CD8-positive, alpha-beta T cell (primary cell): ENCODE measurements at regions of chr1 and their contacts with region 1.

Region 1: GRCh38 chr1:85259118-85259911 is at the start of gene C1orf52:
- DNase-seq: peak; percentile 86 to 99 (median 98)
- ATAC-seq: peak; percentile 96
- H3K4me3 ChIP-seq: peak within 1 kb of the TSS; percentile 65 to 93
- H3K4me3 Mint-ChIP-seq: peak within 1 kb of the TSS; percentile 97
- H3K27ac ChIP-seq: peak within 1 kb of the TSS; percentile 78 to 88
- H3K27ac Mint-ChIP-seq: peak within 1 kb of the TSS; percentile 95
- H3K4me1 ChIP-seq: peaks cover 24% of the 10 kb centered on the region
- H3K4me1 Mint-ChIP-seq: peaks cover 36% of the 10 kb centered on the region
- H3K27me3 ChIP-seq: no peaks in the 10 kb centered on the region
- H3K27me3 Mint-ChIP-seq: no peaks in the 10 kb centered on the region
- CTCF ChIP-seq: peak; percentile 99
- total RNA-seq, gene C1orf52: 70.7 to 74.4 TPM

Region 2: DNA sequence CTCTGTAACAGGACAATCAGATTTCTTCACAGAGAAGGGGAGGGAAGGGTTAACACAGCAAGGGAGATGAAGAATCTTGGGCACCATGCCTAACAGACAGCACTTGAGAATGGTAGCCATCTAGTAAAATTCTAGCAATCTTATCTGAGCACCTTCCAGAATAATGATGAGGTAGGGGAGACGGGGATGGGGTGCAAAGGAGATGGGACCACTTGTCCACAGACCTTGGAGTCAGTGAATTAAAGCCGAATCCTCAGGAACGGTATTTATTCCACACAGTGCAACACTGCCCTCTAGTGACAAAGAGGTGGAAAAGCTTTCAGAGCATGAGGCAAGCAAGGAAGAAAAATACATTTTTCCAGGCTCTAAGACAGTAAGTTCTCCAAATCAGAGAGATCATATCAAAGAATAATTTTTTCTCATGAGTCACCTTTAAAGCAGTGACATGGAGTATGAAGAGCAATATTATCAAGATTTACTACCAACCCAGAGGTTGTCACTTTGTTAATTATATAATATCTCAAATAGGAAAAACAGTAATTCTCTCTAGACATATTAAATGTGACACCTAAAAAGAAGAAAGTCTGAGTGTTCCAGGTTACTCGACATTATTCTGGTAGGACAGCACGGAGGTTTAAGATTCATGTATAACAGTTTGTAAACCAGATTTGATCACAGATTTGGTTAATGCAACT is 323.1 kb before region 1 on chr1:
- CTCF ChIA-PET with region 1: interaction called, 181 read pairs
- POLR2A ChIA-PET with region 1: no interaction called
- intact Hi-C with region 1: no loop called
- DNase-seq: peak in 7 of 9 experiments; percentile 10 to 79 (median 35)
- ATAC-seq: peak; percentile 73
- H3K4me3 ChIP-seq: no peak overlapping the region
- H3K4me3 Mint-ChIP-seq: no peak overlapping the region
- H3K27ac ChIP-seq: no peak overlapping the region
- H3K27ac Mint-ChIP-seq: no peak overlapping the region
- H3K4me1 ChIP-seq: peaks cover 5% of the 10 kb centered on the region
- H3K4me1 Mint-ChIP-seq: peaks cover 4% of the 10 kb centered on the region
- H3K27me3 ChIP-seq: no peaks in the 10 kb centered on the region
- H3K27me3 Mint-ChIP-seq: no peaks in the 10 kb centered on the region
- CTCF ChIP-seq: peak; percentile 98

Region 3: DNA sequence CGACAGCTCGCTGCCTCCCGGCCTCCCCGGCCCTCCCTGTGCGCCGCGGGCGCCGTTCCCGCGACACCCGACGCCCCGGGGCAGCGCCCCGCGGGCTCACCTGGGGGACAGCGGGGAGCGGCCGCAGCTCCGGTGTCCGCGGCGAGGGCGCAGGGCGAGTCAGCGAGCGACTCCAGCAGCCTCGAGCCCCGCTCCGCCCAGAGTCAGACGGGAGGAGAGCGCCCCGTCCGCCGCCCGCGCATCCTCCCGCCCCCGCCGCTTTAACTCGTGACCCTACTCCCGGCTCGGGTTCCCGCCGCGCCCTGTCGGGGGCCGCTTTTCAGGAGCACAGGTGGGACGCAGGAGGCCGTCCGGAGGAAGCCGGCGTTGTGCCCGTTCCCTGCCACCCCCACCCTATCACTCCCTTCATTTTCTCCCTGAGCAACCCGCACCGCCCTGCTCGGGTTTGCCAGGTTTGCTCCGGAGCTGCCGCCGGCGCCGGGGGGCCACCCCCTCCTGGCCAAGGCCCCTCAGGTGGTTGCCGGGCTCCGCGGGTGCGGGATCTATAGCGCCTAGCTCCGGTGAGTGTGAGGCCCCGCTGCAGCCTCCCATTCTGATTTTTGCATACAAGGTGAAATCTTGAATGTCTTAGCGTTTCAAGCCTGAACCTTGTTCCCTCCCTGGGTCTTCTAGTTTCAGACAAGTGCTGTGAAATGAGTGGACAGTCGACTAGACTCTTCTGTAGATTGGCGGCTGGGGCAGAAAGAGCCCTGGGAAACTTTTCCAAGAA is 210.8 kb before region 1 on chr1 and contains the start of gene MCOLN3:
- CTCF ChIA-PET with region 1: interaction called, 3 read pairs
- POLR2A ChIA-PET with region 1: no interaction called
- intact Hi-C with region 1: loop called in 1 of 2 experiments (anchors 5 kb)
- DNase-seq: peak in 7 of 9 experiments; percentile 23 to 57 (median 34)
- ATAC-seq: peak; percentile 66
- H3K4me3 ChIP-seq: peak within 1 kb of the TSS; percentile 41 to 50
- H3K4me3 Mint-ChIP-seq: peak within 1 kb of the TSS; percentile 80
- H3K27ac ChIP-seq: no peak within 1 kb of the TSS
- H3K27ac Mint-ChIP-seq: no peak within 1 kb of the TSS
- H3K4me1 ChIP-seq: peaks cover 21% of the 10 kb centered on the region
- H3K4me1 Mint-ChIP-seq: peaks cover 31% of the 10 kb centered on the region
- H3K27me3 ChIP-seq: peaks cover 12 to 27% of the 10 kb centered on the region in 2 experiments
- H3K27me3 Mint-ChIP-seq: peaks cover 40% of the 10 kb centered on the region
- CTCF ChIP-seq: no peak
- total RNA-seq, gene MCOLN3: 0.11 to 0.14 TPM

Region 4: DNA sequence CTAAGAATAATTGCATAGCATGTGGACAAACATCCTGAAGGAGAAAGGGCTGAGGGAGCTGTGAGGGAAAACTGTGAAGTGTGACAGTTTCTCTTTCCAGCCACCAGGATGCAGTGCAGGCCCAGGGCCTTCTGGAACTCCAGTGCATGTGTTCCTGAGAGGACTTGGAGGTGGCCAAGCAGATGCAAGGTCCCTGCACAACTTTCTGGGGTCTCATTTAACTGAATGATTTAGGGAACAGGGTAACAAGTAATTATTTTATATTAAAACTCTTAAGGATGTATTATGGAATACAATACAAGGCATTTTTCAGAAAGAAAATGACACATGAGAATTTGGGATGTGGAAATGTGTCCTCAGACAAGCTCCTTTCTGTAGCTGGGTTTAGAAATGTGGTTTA is 149.8 kb before region 1 on chr1:
- CTCF ChIA-PET with region 1: interaction called, 43 read pairs
- POLR2A ChIA-PET with region 1: no interaction called
- intact Hi-C with region 1: loop called (anchors 1 kb)
- DNase-seq: peak in 7 of 9 experiments; percentile 6 to 70 (median 50)
- ATAC-seq: peak; percentile 81
- H3K4me3 ChIP-seq: no peak overlapping the region
- H3K4me3 Mint-ChIP-seq: no peak overlapping the region
- H3K27ac ChIP-seq: no peak overlapping the region
- H3K27ac Mint-ChIP-seq: no peak overlapping the region
- H3K4me1 ChIP-seq: no peaks in the 10 kb centered on the region
- H3K4me1 Mint-ChIP-seq: no peaks in the 10 kb centered on the region
- H3K27me3 ChIP-seq: no peaks in the 10 kb centered on the region
- H3K27me3 Mint-ChIP-seq: peaks cover 3% of the 10 kb centered on the region
- CTCF ChIP-seq: peak; percentile 68

Region 5: GRCh38 chr1:85240174-85240601 is 19.1 kb before region 1 on chr1:
- CTCF ChIA-PET with region 1: interaction called, 10 read pairs
- POLR2A ChIA-PET with region 1: interaction called, 3 read pairs
- intact Hi-C with region 1: no loop called
- DNase-seq: peak in 2 of 9 experiments; percentile 35 to 47
- ATAC-seq: peak; percentile 61
- H3K4me3 ChIP-seq: no peak overlapping the region
- H3K4me3 Mint-ChIP-seq: no peak overlapping the region
- H3K27ac ChIP-seq: no peak overlapping the region
- H3K27ac Mint-ChIP-seq: no peak overlapping the region
- H3K4me1 ChIP-seq: no peaks in the 10 kb centered on the region
- H3K4me1 Mint-ChIP-seq: peaks cover 13% of the 10 kb centered on the region
- H3K27me3 ChIP-seq: peaks cover 0 to 3% of the 10 kb centered on the region in 2 experiments
- H3K27me3 Mint-ChIP-seq: peaks cover 14% of the 10 kb centered on the region
- CTCF ChIP-seq: no peak

Region 6: DNA sequence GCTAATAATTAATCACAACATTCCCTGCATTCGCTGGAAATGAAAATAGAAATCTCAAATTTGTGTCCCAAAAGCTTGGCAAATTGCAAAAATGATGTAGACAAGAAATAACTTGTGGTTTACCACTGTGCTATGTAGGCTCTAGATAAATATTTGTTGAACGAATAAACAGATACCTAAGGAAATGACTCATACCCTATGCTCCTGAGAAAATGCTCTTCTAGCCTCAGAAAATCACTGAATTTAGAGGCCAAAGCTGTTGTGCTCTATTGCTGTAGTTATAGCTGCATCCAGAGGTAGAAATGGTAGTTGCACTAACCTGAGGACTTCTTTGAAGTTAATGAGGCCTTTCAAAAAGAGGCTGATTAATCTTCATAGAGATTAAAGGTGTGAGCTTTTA is 590.9 kb after region 1 on chr1:
- CTCF ChIA-PET with region 1: no interaction called
- POLR2A ChIA-PET with region 1: no interaction called
- intact Hi-C with region 1: no loop called
- DNase-seq: no peak
- ATAC-seq: no peak
- H3K4me3 ChIP-seq: no peak overlapping the region
- H3K4me3 Mint-ChIP-seq: no peak overlapping the region
- H3K27ac ChIP-seq: no peak overlapping the region
- H3K27ac Mint-ChIP-seq: no peak overlapping the region
- H3K4me1 ChIP-seq: no peaks in the 10 kb centered on the region
- H3K4me1 Mint-ChIP-seq: no peaks in the 10 kb centered on the region
- H3K27me3 ChIP-seq: no peaks in the 10 kb centered on the region
- H3K27me3 Mint-ChIP-seq: no peaks in the 10 kb centered on the region
- CTCF ChIP-seq: no peak